ENCODE measurements at regions of chr12 and their contacts with region 1.

Region 1: GRCh38 chr12:103858953-103859601 is 18.0 kb upstream of the NT5DC3 start:
- DNase-seq: peak; percentile 68 to 95
- H3K4me3 ChIP-seq: no peak overlapping the region
- H3K27ac ChIP-seq: peak overlapping the region; percentile 86 to 89
- H3K4me1 ChIP-seq: peaks cover 6 to 12% of the 10 kb centered on the region in 2 donors
- H3K27me3 ChIP-seq: no peaks in the 10 kb centered on the region
- CTCF ChIP-seq: no peak

Region 2: DNA sequence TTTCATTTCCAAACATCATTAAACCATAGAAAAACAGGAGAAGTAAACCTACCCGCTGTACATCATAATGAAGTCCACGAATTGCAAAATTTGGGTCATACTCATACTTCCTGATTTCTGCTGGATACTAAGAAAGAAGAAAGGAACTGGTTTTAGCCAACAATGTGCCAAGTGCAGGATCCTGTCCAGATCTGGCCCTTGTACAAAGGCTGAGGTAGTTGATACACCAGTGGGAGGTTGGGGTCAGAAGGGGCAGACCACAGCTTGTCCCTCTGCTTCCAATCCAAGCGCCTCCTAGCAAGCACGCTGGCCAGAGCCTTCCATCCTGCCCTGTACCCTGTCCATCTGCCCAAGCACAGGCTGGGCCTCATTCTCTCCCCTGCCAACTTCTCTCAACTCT is 52.3 kb before region 1 on chr12:
- intact Hi-C with region 1: no loop called
- DNase-seq: no peak
- H3K4me3 ChIP-seq: no peak overlapping the region
- H3K27ac ChIP-seq: peak overlapping the region; percentile 79 to 86
- H3K4me1 ChIP-seq: peaks cover 7 to 58% of the 10 kb centered on the region in 2 donors
- H3K27me3 ChIP-seq: no peaks in the 10 kb centered on the region
- CTCF ChIP-seq: no peak

Region 3: DNA sequence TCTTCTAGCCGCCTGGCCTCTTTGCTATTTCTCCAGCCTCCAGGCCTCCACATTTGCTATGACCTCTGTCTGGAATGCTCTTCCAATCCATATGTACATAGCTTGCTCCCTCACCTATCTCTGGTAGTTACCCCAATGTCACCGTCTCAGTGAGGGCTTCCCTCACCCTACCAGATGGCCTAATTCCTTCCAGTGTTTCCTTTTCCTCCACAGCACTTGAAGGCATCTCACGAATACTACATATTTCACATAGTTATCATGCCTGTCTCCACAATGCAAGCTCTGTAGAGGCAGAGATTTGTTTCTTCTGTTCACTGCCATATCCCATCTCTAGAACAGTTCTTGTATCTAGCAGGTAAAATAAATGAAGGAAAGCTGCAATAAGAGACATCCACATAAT is 49.8 kb after region 1 on chr12:
- intact Hi-C with region 1: no loop called
- DNase-seq: no peak
- H3K4me3 ChIP-seq: no peak overlapping the region
- H3K27ac ChIP-seq: no peak overlapping the region
- H3K4me1 ChIP-seq: no peaks in the 10 kb centered on the region
- H3K27me3 ChIP-seq: no peaks in the 10 kb centered on the region
- CTCF ChIP-seq: no peak

Region 4: DNA sequence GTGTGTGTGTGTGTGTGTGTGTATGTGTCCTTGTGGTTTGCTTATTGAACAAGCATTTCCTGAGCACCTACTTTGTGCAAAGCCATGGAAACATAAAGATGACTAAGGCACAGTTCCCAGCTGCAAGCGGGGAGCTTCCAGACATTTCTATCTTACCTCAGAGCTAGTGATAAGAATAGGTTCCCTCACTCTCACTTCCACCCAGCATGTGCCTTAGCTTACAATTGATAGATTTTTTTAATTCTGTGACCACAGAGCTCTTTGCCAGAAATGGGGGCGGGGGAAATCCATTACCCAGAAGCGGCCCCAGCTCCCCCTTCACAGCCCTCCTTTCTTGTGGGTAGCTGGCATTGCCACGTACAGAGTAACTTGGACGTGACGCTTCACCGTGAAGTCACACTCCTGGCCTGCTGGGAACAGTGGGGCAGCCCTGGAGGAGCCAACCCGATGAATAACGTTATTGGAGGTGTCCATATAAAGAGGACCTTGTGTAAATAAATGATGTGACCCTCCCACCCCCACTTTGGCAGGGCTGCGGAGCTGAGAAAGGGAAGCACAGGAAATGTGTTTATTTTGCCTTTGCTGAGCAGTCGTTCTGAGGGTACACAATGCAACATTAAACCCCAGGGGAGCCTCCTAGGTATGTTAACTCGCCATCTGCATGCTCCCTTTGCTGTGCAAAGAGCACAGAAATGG is 836.5 kb after region 1 on chr12:
- intact Hi-C with region 1: loop called (anchors 10 kb)
- DNase-seq: peak; percentile 62 to 91
- H3K4me3 ChIP-seq: no peak overlapping the region
- H3K27ac ChIP-seq: peak overlapping the region; percentile 25 to 41
- H3K4me1 ChIP-seq: peaks cover 3 to 23% of the 10 kb centered on the region in 2 donors
- H3K27me3 ChIP-seq: no peaks in the 10 kb centered on the region
- CTCF ChIP-seq: no peak

Measured in ascending aorta (tissue), 2 donors.